Transverse colon (tissue), 4 donors: ENCODE measurements at regions of chr15 and their contacts with region 1.

Region 1: GRCh38 chr15:31925541-31925940 is 104.8 kb upstream of the CHRNA7 start:
- DNase-seq: peak; percentile 72
- H3K4me3 ChIP-seq: peak overlapping the region in 3 of 4 donors; percentile 13 to 40 (median 26)
- H3K27ac ChIP-seq: peak overlapping the region; percentile 80 to 87 (median 84)
- H3K4me1 ChIP-seq: peaks cover 0 to 13% (median 6%) of the 10 kb centered on the region in 4 donors
- H3K27me3 ChIP-seq: no peaks in the 10 kb centered on the region
- CTCF ChIP-seq: no peak
- EP300 ChIP-seq: no peak
- POLR2A ChIP-seq: peak; percentile 73

Region 2: GRCh38 chr15:31857194-31857593 is 68.3 kb before region 1 on chr15:
- in situ Hi-C with region 1: no loop called
- intact Hi-C with region 1: no loop called
- DNase-seq: no peak
- H3K4me3 ChIP-seq: no peak overlapping the region
- H3K27ac ChIP-seq: no peak overlapping the region
- H3K4me1 ChIP-seq: no peaks in the 10 kb centered on the region
- H3K27me3 ChIP-seq: no peaks in the 10 kb centered on the region
- CTCF ChIP-seq: no peak
- EP300 ChIP-seq: no peak
- POLR2A ChIP-seq: no peak

Region 3: DNA sequence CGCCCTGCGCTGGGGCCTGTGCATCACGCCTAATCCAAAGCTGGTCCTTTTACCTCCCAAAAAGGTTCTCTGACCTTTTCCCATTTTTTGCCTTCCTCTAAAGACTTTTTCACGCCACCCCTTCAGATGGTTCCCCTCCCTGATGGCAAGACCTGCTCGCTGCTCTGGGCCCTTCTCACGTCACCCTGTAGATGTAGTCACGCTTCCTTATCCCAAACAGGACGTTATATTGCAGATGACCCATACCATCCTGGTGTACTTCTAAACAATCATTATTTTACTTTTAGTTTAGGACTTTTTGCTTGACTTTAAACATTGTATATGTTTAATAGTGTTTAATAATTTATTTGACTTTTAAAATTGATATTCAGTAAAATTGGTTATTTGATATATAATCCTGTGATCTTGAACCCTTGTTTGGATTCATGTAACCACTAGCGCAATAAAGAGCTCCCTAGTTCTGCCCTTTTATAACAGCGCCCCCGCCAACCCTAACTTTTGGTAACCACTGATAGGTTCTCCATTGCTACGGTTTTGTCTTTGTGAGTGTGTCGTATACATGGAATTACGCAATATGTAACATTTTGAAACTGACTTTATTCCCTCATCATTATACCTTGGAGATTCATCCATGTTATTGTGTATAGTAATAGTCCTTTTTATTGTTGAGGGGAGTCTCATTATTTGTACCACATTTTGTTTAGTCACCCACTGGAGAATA is 54.2 kb before region 1 on chr15:
- in situ Hi-C with region 1: no loop called
- intact Hi-C with region 1: no loop called
- DNase-seq: no peak
- H3K4me3 ChIP-seq: peak overlapping the region; percentile 26 to 87 (median 72)
- H3K27ac ChIP-seq: peak overlapping the region; percentile 82 to 90 (median 88)
- H3K4me1 ChIP-seq: peaks cover 0 to 15% (median 7%) of the 10 kb centered on the region in 4 donors
- H3K27me3 ChIP-seq: no peaks in the 10 kb centered on the region
- CTCF ChIP-seq: peak in 2 of 5 experiments; percentile 4 to 20
- EP300 ChIP-seq: no peak
- POLR2A ChIP-seq: no peak

Region 4: DNA sequence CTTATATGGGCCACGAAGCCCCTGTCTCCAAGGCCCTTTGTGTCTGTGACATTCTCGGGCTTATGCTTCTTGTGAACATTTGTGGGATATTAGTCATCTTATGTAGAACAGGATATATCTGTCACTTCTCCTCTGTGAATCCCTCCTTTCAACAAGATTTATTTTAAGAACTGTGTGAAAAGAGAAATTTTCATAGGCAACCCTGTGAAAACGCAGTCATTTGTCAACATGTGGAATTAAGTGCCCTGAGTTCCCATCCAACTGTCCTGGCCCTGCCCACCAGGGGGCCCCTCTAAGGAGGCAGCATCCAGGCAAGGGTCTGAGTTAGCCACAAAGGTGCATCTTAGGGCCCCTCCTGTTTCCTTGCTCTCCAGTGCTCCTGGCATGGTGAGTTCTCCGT is 27.9 kb after region 1 on chr15:
- in situ Hi-C with region 1: no loop called
- intact Hi-C with region 1: loop called (anchors 1 kb)
- DNase-seq: no peak
- H3K4me3 ChIP-seq: no peak overlapping the region
- H3K27ac ChIP-seq: no peak overlapping the region
- H3K4me1 ChIP-seq: no peaks in the 10 kb centered on the region
- H3K27me3 ChIP-seq: no peaks in the 10 kb centered on the region
- CTCF ChIP-seq: no peak
- EP300 ChIP-seq: no peak
- POLR2A ChIP-seq: no peak